Left cardiac atrium (tissue), 4 donors: ENCODE measurements at regions of chr2 and their contacts with region 1.

Region 1: GRCh38 chr2:8004250-8004681 is 677.6 kb upstream of the ID2 start:
- DNase-seq: no peak
- ATAC-seq: peak; percentile 69 to 88

Region 2: DNA sequence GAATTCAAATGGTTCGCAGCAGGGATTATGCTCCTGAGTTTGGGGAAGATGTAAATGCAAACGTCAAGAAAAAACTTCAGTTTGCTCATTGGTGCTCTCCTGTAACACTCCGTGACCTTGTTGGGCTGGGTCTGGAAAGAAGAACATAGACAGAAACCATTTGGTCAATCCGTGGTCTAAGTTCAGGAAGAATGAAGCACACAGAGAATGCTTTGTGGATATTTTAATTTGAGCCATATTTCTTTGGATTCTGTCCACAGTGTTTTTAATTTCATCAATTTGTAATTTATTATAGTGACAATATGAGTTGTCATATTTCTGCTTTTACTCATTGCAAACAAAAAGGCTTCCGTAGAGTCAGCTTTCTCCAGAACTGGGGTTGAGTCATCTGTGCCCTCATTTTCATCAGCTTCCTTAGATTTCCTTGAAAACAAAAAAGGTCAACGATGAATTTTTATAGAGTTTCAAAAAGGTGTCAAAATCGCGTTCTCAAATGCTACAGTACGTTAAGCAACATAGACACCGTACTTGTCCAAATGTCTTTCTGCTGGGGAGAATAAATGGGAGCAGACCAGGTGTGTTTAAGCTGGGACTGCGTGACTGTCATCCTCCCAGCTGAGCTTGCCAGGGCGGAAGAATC is 480.7 kb before region 1 on chr2:
- intact Hi-C with region 1: no loop called
- DNase-seq: no peak
- ATAC-seq: no peak

Region 3: GRCh38 chr2:7845332-7845731 is 158.9 kb before region 1 on chr2:
- intact Hi-C with region 1: loop called in 1 of 2 experiments (anchors 10 kb)
- DNase-seq: no peak
- ATAC-seq: peak in 1 of 2 donors; percentile 48

Region 4: DNA sequence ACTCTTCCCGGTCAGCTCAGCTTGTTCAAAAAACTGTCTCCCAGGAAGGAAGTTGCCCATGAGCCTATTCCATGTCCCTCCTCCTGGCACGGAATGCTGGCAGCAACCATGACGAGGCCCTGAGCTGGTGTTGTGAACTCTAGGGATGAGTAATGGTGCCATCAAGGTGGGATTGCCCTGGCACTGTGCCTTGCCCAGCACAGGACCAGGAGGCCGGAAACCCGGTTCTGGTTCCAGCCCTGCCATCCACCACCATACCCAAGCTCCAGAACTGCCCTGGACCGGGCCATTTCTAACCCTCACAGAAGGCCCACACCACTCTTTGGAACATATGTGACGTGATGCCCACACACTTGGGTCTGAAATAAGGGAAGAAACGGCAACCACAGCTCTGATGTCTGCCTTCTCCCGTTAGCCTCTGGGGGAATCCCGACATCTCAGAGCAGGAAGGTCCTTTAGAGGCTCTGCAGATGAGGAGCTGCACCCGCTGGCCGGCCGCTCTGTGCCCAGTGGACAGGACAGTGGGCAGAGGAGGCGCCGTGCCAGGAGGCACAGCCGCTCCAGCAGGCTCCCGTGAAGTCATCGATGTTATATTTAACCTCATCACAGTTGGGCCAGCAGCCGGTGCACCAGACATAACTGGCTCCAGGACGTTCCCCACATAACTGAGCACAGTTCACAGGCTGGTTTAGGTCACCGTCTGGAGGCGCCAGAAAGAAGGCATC is 215.5 kb after region 1 on chr2:
- intact Hi-C with region 1: loop called in 1 of 2 experiments (anchors 5 kb)
- DNase-seq: peak; percentile 72
- ATAC-seq: peak; percentile 92 to 95